ENCODE measurements at regions of chr18 and their contacts with region 1.

Region 1: GRCh38 chr18:34122724-34123334 is 101.9 kb downstream of the NOL4 start:
- DNase-seq: peak; percentile 55
- H3K4me3 ChIP-seq: peak overlapping the region in 1 of 2 experiments; percentile 21; a peak in 1 of 4 replicates
- H3K27ac ChIP-seq: no peak overlapping the region
- H3K4me1 ChIP-seq: peaks cover 1 to 3% of the 10 kb centered on the region in 2 experiments; a peak in 2 of 4 replicates
- H3K27me3 ChIP-seq: no peaks in the 10 kb centered on the region
- CTCF ChIP-seq: peak; percentile 97
- EP300 ChIP-seq: no peak
- RAD21 ChIP-seq: peak; percentile 91

Region 2: DNA sequence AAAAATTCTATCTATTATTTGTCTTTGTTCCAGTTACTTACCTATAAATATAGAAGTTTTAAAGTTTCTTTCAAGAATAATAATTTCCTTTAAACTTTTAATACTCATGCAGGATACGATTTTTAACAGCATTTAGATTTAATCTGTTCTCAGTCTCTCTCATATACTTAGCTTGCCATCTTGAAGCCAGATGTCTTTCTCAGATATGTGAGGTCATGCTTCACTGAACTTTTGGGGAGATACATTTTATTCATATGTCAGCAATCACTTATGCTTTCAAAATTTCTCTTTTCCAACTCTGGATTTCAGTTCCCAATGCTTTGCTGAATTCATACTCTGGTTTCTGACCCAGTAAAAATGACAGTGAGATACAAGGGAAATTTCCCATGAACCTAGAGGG is 615.8 kb before region 1 on chr18:
- CTCF ChIA-PET with region 1: no interaction called
- POLR2A ChIA-PET with region 1: no interaction called
- DNase-seq: no peak
- H3K4me3 ChIP-seq: no peak overlapping the region
- H3K27ac ChIP-seq: no peak overlapping the region
- H3K4me1 ChIP-seq: no peaks in the 10 kb centered on the region; a peak in 1 of 4 replicates
- H3K27me3 ChIP-seq: no peaks in the 10 kb centered on the region
- CTCF ChIP-seq: no peak
- EP300 ChIP-seq: no peak
- RAD21 ChIP-seq: no peak

Region 3: GRCh38 chr18:34153711-34154110 is 30.9 kb after region 1 on chr18:
- CTCF ChIA-PET with region 1: interaction called, 28 read pairs
- POLR2A ChIA-PET with region 1: no interaction called
- DNase-seq: peak; percentile 14
- H3K4me3 ChIP-seq: peak overlapping the region in 1 of 2 experiments; percentile 22; a peak in 2 of 4 replicates
- H3K27ac ChIP-seq: peak overlapping the region in 1 of 2 experiments; percentile 83; a peak in 2 of 4 replicates
- H3K4me1 ChIP-seq: peaks cover 8% of the 10 kb centered on the region in 2 experiments; a peak in 3 of 4 replicates
- H3K27me3 ChIP-seq: peaks cover 5% of the 10 kb centered on the region; the same call in 1 of the 2 replicates
- CTCF ChIP-seq: no peak
- EP300 ChIP-seq: no peak
- RAD21 ChIP-seq: no peak

Region 4: GRCh38 chr18:34196256-34196655 is 73.4 kb after region 1 on chr18:
- CTCF ChIA-PET with region 1: interaction called, 10 read pairs
- POLR2A ChIA-PET with region 1: no interaction called
- DNase-seq: no peak
- H3K4me3 ChIP-seq: no peak overlapping the region
- H3K27ac ChIP-seq: no peak overlapping the region
- H3K4me1 ChIP-seq: no peaks in the 10 kb centered on the region; a peak in 2 of 4 replicates
- H3K27me3 ChIP-seq: no peaks in the 10 kb centered on the region
- CTCF ChIP-seq: no peak
- EP300 ChIP-seq: no peak
- RAD21 ChIP-seq: no peak

Region 5: DNA sequence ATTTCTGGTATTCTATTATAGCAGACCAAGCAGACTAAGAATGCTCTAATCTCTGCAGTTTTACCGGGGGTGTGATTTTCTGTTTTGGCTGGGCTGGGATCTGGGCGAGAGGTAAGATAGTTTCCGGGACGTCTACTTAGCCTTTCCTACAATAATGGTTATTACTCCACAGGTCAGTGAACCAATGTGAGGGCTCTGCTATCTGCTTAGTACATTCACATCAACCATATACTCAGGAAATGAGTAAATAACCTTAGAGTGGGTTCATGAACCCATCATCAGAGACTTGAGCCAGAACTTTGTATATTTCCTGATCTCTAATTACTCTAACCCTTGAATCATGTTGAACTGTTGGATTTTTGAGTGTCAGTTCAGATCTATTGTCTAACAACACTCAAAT is 192.0 kb after region 1 on chr18:
- CTCF ChIA-PET with region 1: interaction called, 38 read pairs
- POLR2A ChIA-PET with region 1: no interaction called
- DNase-seq: no peak
- H3K4me3 ChIP-seq: no peak overlapping the region
- H3K27ac ChIP-seq: no peak overlapping the region
- H3K4me1 ChIP-seq: peaks cover 0 to 3% of the 10 kb centered on the region in 2 experiments; a peak in 2 of 4 replicates
- H3K27me3 ChIP-seq: no peaks in the 10 kb centered on the region
- CTCF ChIP-seq: no peak
- EP300 ChIP-seq: no peak
- RAD21 ChIP-seq: no peak

Region 6: GRCh38 chr18:34787931-34788532 is 665.2 kb after region 1 on chr18:
- CTCF ChIA-PET with region 1: interaction called, 14 read pairs
- POLR2A ChIA-PET with region 1: no interaction called
- DNase-seq: peak; percentile 53
- H3K4me3 ChIP-seq: no peak overlapping the region; a peak in 1 of 4 replicates
- H3K27ac ChIP-seq: no peak overlapping the region
- H3K4me1 ChIP-seq: 0 out of 4 replicates have a peak, but pooled peaks cover 0 to 6% of the 10 kb centered on the region in 2 experiments
- H3K27me3 ChIP-seq: no peaks in the 10 kb centered on the region
- CTCF ChIP-seq: peak; percentile 84
- EP300 ChIP-seq: no peak
- RAD21 ChIP-seq: peak; percentile 94